Activated T-helper 2 cell treated with anti-CD3 and anti-CD28 coated beads, Interferon-gamma antibody, Interleukin-2, Interleukin-4, amounts not matched to agents 10 μg/mL and 5 μg/mL and 100 μg/mL, durations not matched to agents 14 hours and 24 hours and 36 hours (primary cell): ENCODE measurements at regions of chr19 and their contacts with region 1.

Region 1: GRCh38 chr19:29587518-29587986 is 18.5 kb upstream of the POP4 start:
- DNase-seq: peak; percentile 74
- H3K4me3 Mint-ChIP-seq: no peak overlapping the region
- H3K27ac Mint-ChIP-seq: peak overlapping the region; percentile 62
- H3K4me1 Mint-ChIP-seq: peaks cover 27% of the 10 kb centered on the region
- H3K27me3 Mint-ChIP-seq: peaks cover 21% of the 10 kb centered on the region

Region 2: DNA sequence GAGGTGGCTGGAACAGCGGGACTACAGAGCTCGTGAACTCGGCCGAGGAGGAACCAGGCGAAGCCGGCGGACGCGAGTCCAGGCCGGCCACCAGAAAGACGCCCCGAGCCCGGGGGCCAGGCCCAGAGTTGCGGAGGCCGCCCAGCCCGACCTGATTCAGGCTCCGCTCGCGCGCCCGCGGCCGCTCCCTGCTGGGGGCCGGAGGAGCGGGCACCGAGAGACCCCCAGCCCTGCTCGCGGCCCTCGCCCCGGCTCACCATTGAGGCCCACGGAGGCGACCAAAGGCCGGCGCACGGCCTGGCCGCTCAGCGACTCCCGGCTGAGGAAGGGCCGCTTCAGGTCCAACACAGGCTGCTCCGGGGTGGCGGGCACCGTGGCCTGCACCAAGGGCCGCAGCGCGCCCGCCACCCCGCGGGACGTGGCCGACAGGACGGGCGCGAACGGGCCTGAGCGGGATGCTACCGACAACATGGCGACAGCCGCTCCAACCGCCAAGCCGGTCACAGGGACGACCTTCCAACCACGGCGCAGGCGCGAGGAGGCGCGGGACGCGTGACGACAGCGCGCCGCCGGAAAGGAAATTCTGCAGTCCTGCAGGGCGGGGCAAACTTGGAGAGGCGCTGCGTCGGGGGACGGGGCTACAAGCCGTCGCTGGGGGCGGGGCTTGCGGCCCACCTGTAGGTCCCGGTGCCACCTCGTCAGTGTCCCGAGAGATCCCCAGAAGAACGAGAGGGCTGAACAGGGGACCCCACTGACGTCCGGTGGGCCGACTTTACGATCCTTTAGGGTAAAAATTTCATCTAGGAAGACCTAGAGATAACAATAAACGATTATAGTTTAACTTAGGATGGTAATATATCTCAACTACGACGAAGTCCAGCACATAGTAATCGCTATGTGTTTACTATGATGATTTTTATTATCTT is 374.6 kb before region 1 on chr19 and contains the start of gene UQCRFS1:
- intact Hi-C with region 1: loop called (anchors 5 kb)
- DNase-seq: peak; percentile 95
- H3K4me3 Mint-ChIP-seq: peak within 1 kb of the TSS; percentile 97
- H3K27ac Mint-ChIP-seq: peak within 1 kb of the TSS; percentile 97
- H3K4me1 Mint-ChIP-seq: peaks cover 32% of the 10 kb centered on the region
- H3K27me3 Mint-ChIP-seq: no peaks in the 10 kb centered on the region
- total RNA-seq, gene UQCRFS1: 44.6 and 44.8 TPM in 2 replicates

Region 3: DNA sequence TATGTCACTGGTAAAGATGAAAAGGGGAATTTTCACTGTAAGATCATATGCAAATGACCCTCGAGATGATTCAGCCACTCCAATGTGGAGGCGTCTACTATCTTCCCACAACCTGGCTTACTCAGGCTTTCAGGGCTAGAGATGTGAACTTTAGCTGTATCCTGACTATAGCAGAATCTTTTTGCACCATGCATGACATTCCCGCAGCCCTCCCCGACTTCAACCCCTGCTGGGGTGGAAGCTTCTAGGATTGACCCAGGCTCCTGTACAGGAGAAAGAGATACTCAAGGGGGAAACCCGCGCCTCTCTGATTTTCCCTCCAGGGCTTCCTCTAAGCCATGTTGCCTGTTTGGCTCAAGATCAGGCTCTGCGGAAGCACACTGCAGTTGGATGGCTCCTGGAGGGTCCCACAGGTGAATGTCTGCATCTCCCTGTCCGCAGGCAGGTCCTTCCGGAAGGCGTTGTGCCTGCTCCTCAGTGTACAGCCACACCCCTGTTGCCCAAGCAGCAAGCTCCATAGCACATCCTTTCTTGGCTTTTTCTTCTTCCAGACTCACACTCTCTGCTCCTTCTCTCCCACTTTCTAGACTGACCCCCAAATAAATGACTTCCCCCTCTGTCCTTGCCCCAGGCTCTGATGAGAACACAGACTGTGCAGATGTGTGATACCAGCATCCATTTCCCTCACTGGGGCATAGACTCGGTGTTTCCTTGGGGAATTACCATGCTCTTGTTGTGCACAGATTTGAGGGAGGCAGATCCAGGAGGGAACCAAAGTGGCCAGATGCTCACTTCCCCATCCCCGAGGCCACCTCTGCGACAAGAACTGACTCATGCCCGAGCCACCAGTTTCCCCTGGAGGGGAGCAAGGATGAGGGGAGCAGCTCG is 10.5 kb before region 1 on chr19:
- intact Hi-C with region 1: loop called (anchors 1 kb)
- DNase-seq: no peak
- H3K4me3 Mint-ChIP-seq: no peak overlapping the region
- H3K27ac Mint-ChIP-seq: no peak overlapping the region
- H3K4me1 Mint-ChIP-seq: peaks cover 34% of the 10 kb centered on the region
- H3K27me3 Mint-ChIP-seq: peaks cover 41% of the 10 kb centered on the region